ENCODE measurements at regions of chr10 and their contacts with region 1.

Region 1: GRCh38 chr10:45672181-45673073 is at the start of gene ZFAND4:
- DNase-seq: peak; percentile 96
- H3K4me3 Mint-ChIP-seq: peak within 1 kb of the TSS; percentile 88
- H3K27ac Mint-ChIP-seq: peak within 1 kb of the TSS; percentile 62
- H3K4me1 Mint-ChIP-seq: peaks cover 35% of the 10 kb centered on the region
- H3K27me3 Mint-ChIP-seq: no peaks in the 10 kb centered on the region
- total RNA-seq, gene ZFAND4: 9.6 to 11.9 TPM

Region 2: DNA sequence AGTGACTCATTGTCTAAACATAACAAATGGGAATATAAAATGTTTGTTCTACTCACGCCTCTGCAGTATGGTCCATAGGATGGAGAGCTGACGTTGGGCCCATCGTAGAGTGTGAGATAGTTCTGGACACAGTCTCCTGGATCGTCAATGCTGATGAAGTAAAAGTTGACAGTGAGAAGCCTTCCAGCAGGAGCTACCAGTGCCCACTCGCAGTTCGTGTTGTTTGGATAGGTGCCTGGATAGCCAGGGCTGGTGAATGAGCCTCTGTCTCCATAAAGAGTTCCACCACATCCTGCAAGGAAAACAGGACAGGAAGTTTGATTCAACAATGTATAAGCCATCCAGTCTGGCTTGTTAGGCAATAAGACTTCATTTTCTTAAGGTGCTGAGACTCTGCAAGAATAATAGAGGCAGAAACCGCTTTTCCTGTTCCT is 436.6 kb before region 1 on chr10:
- CTCF ChIA-PET with region 1: no interaction called
- POLR2A ChIA-PET with region 1: no interaction called
- intact Hi-C with region 1: loop called (anchors 5 kb)
- DNase-seq: no peak
- H3K4me3 Mint-ChIP-seq: no peak overlapping the region
- H3K27ac Mint-ChIP-seq: no peak overlapping the region
- H3K4me1 Mint-ChIP-seq: no peaks in the 10 kb centered on the region
- H3K27me3 Mint-ChIP-seq: peaks cover 8% of the 10 kb centered on the region

Region 3: GRCh38 chr10:45249978-45250693 is 422.3 kb before region 1 on chr10:
- CTCF ChIA-PET with region 1: interaction called, 14 read pairs
- POLR2A ChIA-PET with region 1: no interaction called
- intact Hi-C with region 1: loop called (anchors 2 kb)
- DNase-seq: no peak
- H3K4me3 Mint-ChIP-seq: peak overlapping the region; percentile 35
- H3K27ac Mint-ChIP-seq: no peak overlapping the region
- H3K4me1 Mint-ChIP-seq: peaks cover 11% of the 10 kb centered on the region
- H3K27me3 Mint-ChIP-seq: peaks cover 2% of the 10 kb centered on the region

Region 4: GRCh38 chr10:45464958-45465567 is 207.4 kb before region 1 on chr10:
- CTCF ChIA-PET with region 1: interaction called, 32 read pairs
- POLR2A ChIA-PET with region 1: interaction called, 3 read pairs
- intact Hi-C with region 1: loop called (anchors 1 kb)
- DNase-seq: peak; percentile 87
- H3K4me3 Mint-ChIP-seq: no peak overlapping the region
- H3K27ac Mint-ChIP-seq: no peak overlapping the region
- H3K4me1 Mint-ChIP-seq: peaks cover 9% of the 10 kb centered on the region
- H3K27me3 Mint-ChIP-seq: no peaks in the 10 kb centered on the region

Region 5: DNA sequence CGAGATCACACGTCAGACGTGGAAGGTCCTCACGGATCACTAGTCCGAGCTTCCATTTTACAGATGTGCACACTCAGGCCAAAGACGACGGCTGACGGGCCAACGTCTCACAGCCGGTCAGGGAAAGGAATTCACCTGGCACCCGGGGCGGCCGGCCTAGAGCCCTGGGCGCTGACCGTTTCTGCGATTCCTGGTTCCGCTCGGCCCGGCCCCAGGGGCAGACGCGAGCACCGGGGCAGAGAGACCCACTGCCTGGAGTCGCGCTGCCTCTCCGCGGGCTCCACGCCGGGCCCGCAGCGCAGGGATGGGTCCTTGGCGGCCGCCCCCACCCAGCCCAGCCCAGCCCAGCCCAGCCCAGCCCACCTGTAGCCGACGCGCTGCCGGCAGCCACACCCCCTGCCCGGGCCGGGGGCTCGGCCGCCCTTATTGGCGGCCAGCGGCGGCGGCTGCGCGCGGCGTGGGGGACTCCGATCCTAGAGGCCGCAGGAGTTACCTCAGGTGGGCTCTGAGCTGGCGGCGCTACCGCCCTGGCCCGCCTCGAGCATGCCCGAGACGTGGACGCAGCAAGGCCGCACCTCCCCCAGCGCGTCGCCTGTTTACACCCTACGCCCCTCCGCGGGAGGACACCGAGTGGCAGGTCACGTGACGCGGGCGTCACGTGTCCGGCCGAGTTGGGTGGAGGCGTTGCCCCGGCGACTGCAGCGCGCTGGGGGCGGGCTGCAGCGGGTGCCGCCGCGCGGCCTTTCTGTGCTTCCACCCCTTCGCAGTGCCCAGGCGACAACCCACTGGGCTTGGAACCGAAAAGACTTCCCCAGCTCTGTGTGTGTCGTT is 77.9 kb before region 1 on chr10:
- CTCF ChIA-PET with region 1: no interaction called
- POLR2A ChIA-PET with region 1: no interaction called
- intact Hi-C with region 1: loop called (anchors 1 kb)
- DNase-seq: peak; percentile 93
- H3K4me3 Mint-ChIP-seq: peak overlapping the region; percentile 80
- H3K27ac Mint-ChIP-seq: peak overlapping the region; percentile 57
- H3K4me1 Mint-ChIP-seq: peaks cover 25% of the 10 kb centered on the region
- H3K27me3 Mint-ChIP-seq: peaks cover 1% of the 10 kb centered on the region

Measured in activated CD4-positive, alpha-beta memory T cell treated with anti-CD3 and anti-CD28 coated beads for 36 hours (primary cell).